Activated CD4-positive, alpha-beta memory T cell treated with anti-CD3 and anti-CD28 coated beads for 36 hours (primary cell): ENCODE measurements at regions of chr7 and their contacts with region 1.

Region 1: GRCh38 chr7:32891800-32892520 is 400 bp upstream of the KBTBD2 start:
- DNase-seq: peak; percentile 99
- H3K4me3 Mint-ChIP-seq: peak overlapping the region; percentile 91
- H3K27ac Mint-ChIP-seq: peak overlapping the region; percentile 100
- H3K4me1 Mint-ChIP-seq: peaks cover 51% of the 10 kb centered on the region
- H3K27me3 Mint-ChIP-seq: no peaks in the 10 kb centered on the region

Region 2: GRCh38 chr7:32495298-32496176 is 396.4 kb before region 1 on chr7 and contains the start of gene AVL9:
- CTCF ChIA-PET with region 1: no interaction called
- POLR2A ChIA-PET with region 1: no interaction called
- intact Hi-C with region 1: loop called (anchors 2 kb)
- DNase-seq: peak; percentile 100
- H3K4me3 Mint-ChIP-seq: peak within 1 kb of the TSS; percentile 86
- H3K27ac Mint-ChIP-seq: peak within 1 kb of the TSS; percentile 93
- H3K4me1 Mint-ChIP-seq: peaks cover 36% of the 10 kb centered on the region
- H3K27me3 Mint-ChIP-seq: no peaks in the 10 kb centered on the region
- total RNA-seq, gene AVL9: 39.6 to 44.2 TPM

Region 3: GRCh38 chr7:32871624-32872371 is 20.2 kb before region 1 on chr7:
- CTCF ChIA-PET with region 1: interaction called, 3 read pairs
- POLR2A ChIA-PET with region 1: interaction called, 5 read pairs
- intact Hi-C with region 1: loop called (anchors 2 kb)
- DNase-seq: no peak
- H3K4me3 Mint-ChIP-seq: no peak overlapping the region
- H3K27ac Mint-ChIP-seq: no peak overlapping the region
- H3K4me1 Mint-ChIP-seq: peaks cover 31% of the 10 kb centered on the region
- H3K27me3 Mint-ChIP-seq: no peaks in the 10 kb centered on the region

Region 4: DNA sequence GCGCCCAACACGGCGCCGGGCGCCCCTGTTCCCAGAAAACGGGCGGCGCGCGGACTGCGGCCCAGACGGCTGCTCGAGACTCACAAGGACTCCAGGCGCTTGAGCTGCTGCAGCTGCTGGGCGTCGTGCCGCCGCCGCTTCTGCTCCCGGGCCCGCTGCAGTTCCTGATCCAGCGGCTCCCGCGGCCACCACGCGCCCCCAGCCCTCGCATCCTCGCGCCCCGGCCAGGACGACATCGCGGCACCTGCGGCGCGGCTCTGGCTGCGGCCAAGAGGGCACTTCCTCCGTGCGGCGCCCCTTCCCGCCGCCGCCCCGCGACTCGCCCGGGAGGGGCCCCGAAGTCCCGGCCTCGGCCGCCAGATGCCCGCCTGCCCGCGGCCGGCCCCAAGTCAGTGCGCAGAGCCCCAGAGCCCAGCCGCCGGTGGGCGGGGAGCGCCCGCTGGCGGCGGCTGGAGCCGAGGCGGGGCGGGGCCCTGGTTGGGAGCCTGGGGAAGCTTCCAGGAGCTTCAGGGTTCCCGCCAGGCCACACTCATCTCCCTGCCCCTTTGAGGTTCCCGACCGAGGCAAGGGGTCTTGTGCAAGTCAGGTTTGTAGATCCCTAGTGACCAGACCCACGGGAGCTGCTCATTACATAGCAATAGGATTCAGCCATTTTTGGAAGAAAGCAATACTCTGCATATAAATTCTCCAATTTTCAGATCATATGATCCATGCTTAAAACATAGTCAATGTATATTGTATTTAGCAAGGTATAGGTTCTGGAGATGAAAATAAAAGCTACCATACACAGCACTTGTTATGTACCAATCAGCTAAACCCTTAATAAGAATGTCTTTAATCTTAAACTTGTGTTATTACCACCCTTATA is 51.1 kb after region 1 on chr7:
- CTCF ChIA-PET with region 1: interaction called, 17 read pairs
- POLR2A ChIA-PET with region 1: interaction called, 6 read pairs
- intact Hi-C with region 1: loop called (anchors 1 kb)
- DNase-seq: peak; percentile 82
- H3K4me3 Mint-ChIP-seq: peak overlapping the region; percentile 72
- H3K27ac Mint-ChIP-seq: no peak overlapping the region
- H3K4me1 Mint-ChIP-seq: peaks cover 10% of the 10 kb centered on the region
- H3K27me3 Mint-ChIP-seq: peaks cover 3% of the 10 kb centered on the region

Region 5: DNA sequence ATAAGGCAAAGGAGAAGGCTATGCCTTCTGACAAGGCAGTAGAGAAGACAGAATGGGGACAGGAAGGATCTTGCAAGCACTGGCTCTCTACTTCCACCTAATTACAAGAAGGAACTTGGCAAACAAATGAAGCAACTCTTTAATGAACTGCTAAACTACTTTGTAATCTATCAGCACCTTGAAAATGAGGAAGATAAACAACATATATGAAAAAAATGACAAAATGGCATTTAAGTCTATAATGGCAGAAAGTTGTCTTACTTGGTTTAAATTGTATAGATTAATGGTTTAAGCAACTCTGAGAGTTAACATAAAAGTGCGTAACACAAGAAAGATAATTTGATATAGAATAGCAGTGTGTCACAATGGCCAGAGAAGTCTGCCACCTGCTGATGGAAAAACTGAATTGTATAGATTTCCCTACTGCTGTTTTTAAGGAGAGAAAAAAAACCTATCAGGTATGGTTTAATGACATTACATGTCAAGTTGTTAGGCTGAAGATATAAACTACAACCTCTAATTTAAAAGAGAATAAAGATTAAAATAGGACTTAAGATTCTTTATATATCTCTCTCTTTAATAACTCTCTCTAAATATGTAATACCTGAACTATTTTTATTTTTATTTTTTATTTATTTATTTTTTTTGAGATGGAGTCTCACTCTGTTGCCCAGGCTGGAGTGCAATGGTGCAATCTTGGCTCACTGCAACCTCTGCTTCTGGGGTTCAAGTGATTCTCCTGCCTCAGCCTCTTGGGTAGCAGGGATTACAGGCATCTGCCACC is 158.8 kb after region 1 on chr7:
- CTCF ChIA-PET with region 1: interaction called, 5 read pairs
- POLR2A ChIA-PET with region 1: no interaction called
- intact Hi-C with region 1: loop called (anchors 2 kb)
- DNase-seq: no peak
- H3K4me3 Mint-ChIP-seq: no peak overlapping the region
- H3K27ac Mint-ChIP-seq: no peak overlapping the region
- H3K4me1 Mint-ChIP-seq: peaks cover 44% of the 10 kb centered on the region
- H3K27me3 Mint-ChIP-seq: no peaks in the 10 kb centered on the region

Region 6: GRCh38 chr7:33109005-33109757 is 217.2 kb after region 1 on chr7 and contains the start of gene RP9:
- CTCF ChIA-PET with region 1: interaction called, 20 read pairs
- POLR2A ChIA-PET with region 1: interaction called, 7 read pairs
- intact Hi-C with region 1: loop called (anchors 2 kb)
- DNase-seq: peak; percentile 83
- H3K4me3 Mint-ChIP-seq: peak within 1 kb of the TSS; percentile 90
- H3K27ac Mint-ChIP-seq: peak within 1 kb of the TSS; percentile 40
- H3K4me1 Mint-ChIP-seq: peaks cover 36% of the 10 kb centered on the region
- H3K27me3 Mint-ChIP-seq: peaks cover 2% of the 10 kb centered on the region
- total RNA-seq, gene RP9: 11.6 to 14.0 TPM